ENCODE measurements at regions of chr12 and their contacts with region 1.

Region 1: GRCh38 chr12:106919910-106920544 is 35.7 kb upstream of the TMEM263 start:
- DNase-seq: no peak
- ATAC-seq: peak in 1 of 2 donors; percentile 59
- H3K4me3 ChIP-seq: no peak overlapping the region
- H3K27ac ChIP-seq: no peak overlapping the region
- H3K4me1 ChIP-seq: peaks cover 4% of the 10 kb centered on the region
- H3K27me3 ChIP-seq: peaks cover 7% of the 10 kb centered on the region
- CTCF ChIP-seq: peak; percentile 81

Region 2: DNA sequence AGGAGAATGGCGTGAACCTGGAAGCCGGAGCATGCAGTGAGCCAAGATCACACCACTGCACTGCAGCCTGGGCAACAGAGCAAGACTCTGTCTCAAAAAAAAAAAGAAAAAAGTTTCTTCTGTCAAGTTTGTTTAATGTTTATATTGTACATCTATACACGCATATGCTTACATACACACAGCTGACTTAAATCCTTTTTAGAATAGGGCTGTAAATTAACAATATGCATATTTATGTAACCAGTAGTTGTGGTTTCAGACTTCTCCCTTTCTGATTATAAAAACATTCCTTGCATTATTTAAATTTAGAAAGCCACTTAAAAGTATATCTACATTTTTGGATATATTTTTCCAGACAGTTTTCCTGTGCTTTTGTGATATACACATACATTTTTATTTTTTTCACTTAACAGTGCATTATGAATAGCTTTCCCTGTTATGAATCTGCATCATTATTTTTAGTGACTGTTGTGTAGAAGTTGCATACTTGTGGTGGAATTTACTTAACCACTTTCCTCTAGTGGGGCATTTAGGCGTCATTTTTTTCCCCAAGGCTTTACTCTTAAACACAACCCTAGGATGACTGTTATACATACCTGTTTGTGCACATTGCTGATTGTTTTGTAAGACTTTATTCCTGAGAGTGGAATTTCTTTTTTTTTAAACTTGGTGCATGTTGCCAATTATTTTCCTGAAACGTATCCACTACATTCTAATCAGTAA is 533.1 kb before region 1 on chr12:
- intact Hi-C with region 1: loop called (anchors 10 kb)
- DNase-seq: no peak
- ATAC-seq: peak in 1 of 2 donors; percentile 51
- H3K4me3 ChIP-seq: no peak overlapping the region
- H3K27ac ChIP-seq: no peak overlapping the region
- H3K4me1 ChIP-seq: no peaks in the 10 kb centered on the region
- H3K27me3 ChIP-seq: no peaks in the 10 kb centered on the region
- CTCF ChIP-seq: no peak